Naive thymus-derived CD4-positive, alpha-beta T cell (primary cell): ENCODE measurements at regions of chr12 and their contacts with region 1.

Region 1: GRCh38 chr12:122526683-122527477 is at the starts of genes KNTC1 and RSRC2:
- DNase-seq: peak; percentile 87 to 99 (median 99)
- ATAC-seq: peak; percentile 96
- H3K4me3 ChIP-seq: peak within 1 kb of the TSS; percentile 86
- H3K4me3 Mint-ChIP-seq: no peak within 1 kb of the TSS
- H3K27ac ChIP-seq: peak within 1 kb of the TSS; percentile 94
- H3K27ac Mint-ChIP-seq: peak within 1 kb of the TSS in 1 of 9 donors; percentile 68
- H3K4me1 ChIP-seq: peaks cover 30 to 37% of the 10 kb centered on the region in 2 donors
- H3K4me1 Mint-ChIP-seq: peaks cover 24 to 41% (median 36%) of the 10 kb centered on the region in 7 donors
- H3K27me3 ChIP-seq: no peaks in the 10 kb centered on the region
- H3K27me3 Mint-ChIP-seq: no peaks in the 10 kb centered on the region
- total RNA-seq, gene KNTC1: 24.5 to 102 (median 31.0) TPM
- total RNA-seq, gene RSRC2: 89.7 to 249 (median 139) TPM

Region 2: DNA sequence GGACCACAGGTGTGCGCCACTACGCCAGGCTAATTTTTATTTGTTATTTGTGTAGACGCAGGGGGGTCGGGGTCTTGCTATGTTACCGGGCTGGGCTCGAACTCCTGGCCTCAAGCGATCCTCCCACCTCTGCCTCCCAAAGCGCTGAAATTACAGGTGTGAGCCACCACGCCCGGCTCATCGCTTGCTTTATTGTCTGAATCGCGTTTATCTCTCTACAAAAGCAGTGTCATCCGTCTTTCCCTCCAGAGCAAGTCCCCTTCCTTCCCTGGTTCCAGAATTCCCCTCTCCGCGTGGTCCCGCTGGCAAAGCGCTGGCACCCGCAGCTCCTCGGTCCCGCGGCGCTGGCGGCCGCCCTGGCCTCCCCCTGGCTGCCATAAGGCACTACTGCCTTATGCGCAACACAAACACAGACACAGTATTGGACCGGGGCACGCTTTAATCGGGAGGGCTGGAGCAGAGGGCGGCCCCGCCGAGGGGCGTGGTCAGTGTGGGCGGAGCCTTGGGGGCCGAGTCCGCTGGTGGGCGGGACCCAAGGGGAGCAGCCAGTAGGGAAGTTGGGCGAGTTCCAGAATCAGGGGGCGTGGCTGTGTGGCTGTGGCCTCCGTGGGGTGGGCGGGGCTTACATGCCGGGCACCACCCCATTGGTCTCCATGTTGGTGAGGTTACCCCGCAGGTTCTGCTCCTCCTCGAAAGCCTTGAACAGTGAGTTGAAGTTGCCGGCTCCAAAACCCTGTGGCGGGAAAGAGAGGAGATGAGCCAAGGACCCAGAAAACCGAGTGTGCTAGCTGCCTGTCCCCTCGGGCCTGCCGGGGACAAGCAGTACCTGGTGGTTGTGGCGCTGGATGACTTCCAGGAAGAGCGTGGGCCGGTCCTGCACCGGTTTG is 687.5 kb before region 1 on chr12:
- CTCF ChIA-PET with region 1: no interaction called
- POLR2A ChIA-PET with region 1: no interaction called
- intact Hi-C with region 1: loop called in 1 of 2 experiments (anchors 1 kb)
- DNase-seq: peak; percentile 98 to 100 (median 99)
- ATAC-seq: peak; percentile 100
- H3K4me3 ChIP-seq: peak overlapping the region; percentile 91
- H3K4me3 Mint-ChIP-seq: peak overlapping the region; percentile 96 to 100 (median 98)
- H3K27ac ChIP-seq: peak overlapping the region; percentile 58
- H3K27ac Mint-ChIP-seq: peak overlapping the region; percentile 87 to 96 (median 92)
- H3K4me1 ChIP-seq: peaks cover 8 to 13% of the 10 kb centered on the region in 2 donors
- H3K4me1 Mint-ChIP-seq: peaks cover 12 to 27% (median 18%) of the 10 kb centered on the region in 7 donors
- H3K27me3 ChIP-seq: no peaks in the 10 kb centered on the region
- H3K27me3 Mint-ChIP-seq: no peaks in the 10 kb centered on the region

Region 3: DNA sequence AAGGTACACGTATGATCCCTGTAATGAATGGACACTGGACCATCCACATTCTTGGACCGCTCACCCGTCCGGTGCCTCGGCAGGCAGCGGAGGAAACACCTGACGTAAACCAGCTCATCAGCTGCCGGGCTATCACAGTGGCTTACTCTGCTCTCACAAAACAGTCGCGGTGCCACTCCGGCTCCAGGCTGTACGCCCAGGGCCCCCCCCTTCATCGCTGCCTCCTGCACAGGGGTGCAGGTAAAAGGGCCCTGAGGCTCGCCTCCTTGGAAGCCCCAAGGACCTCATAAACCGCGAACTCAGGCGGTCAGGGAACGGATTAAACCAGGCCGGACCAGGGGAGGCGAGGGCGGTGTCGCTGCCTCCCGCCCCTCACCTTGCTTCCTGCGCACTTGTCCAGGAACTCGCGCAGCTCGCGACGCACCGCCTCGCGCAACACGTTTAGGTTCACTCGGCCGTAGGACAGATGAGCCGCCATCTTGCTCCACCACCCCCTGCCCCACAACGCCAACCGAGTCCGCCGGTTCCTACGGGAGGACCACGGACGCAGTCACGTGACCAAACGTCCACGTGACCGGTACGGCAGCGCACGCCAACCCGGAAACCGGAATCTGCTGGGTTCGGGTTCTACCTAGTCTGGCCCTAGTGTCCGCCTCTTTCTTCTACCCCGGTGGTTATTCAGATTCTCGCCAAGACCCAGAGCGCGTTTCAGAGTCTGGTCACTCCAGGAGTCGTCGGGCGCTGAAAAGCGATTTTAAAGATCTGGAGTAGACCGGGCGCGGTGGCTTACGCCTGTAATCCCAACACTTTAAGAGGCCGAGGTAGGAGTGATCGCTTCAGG is 260.7 kb before region 1 on chr12 and contains the start of gene VPS33A:
- CTCF ChIA-PET with region 1: no interaction called
- POLR2A ChIA-PET with region 1: no interaction called
- intact Hi-C with region 1: loop called (anchors 1 to 5 kb)
- DNase-seq: peak; percentile 82 to 96 (median 90)
- ATAC-seq: peak; percentile 89
- H3K4me3 ChIP-seq: peak within 1 kb of the TSS; percentile 74
- H3K4me3 Mint-ChIP-seq: peak within 1 kb of the TSS; percentile 93 to 99 (median 96)
- H3K27ac ChIP-seq: peak within 1 kb of the TSS; percentile 95
- H3K27ac Mint-ChIP-seq: peak within 1 kb of the TSS; percentile 98 to 100 (median 99)
- H3K4me1 ChIP-seq: peaks cover 12 to 17% of the 10 kb centered on the region in 2 donors
- H3K4me1 Mint-ChIP-seq: peaks cover 0 to 37% (median 32%) of the 10 kb centered on the region in 7 donors
- H3K27me3 ChIP-seq: no peaks in the 10 kb centered on the region
- H3K27me3 Mint-ChIP-seq: peaks cover 0 to 6% (median 0%) of the 10 kb centered on the region in 5 donors
- total RNA-seq, gene VPS33A: 19.9 to 34.5 (median 31.4) TPM

Region 4: GRCh38 chr12:122752464-122753318 is 225.8 kb after region 1 on chr12 and contains the start of gene DENR:
- CTCF ChIA-PET with region 1: no interaction called
- POLR2A ChIA-PET with region 1: interaction called, 15 read pairs
- intact Hi-C with region 1: loop called (anchors 1 kb)
- DNase-seq: peak; percentile 98 to 100 (median 99)
- ATAC-seq: peak; percentile 99
- H3K4me3 ChIP-seq: peak within 1 kb of the TSS; percentile 87
- H3K4me3 Mint-ChIP-seq: peak within 1 kb of the TSS; percentile 93 to 100 (median 96)
- H3K27ac ChIP-seq: peak within 1 kb of the TSS; percentile 94
- H3K27ac Mint-ChIP-seq: peak within 1 kb of the TSS; percentile 89 to 98 (median 96)
- H3K4me1 ChIP-seq: peaks cover 12 to 19% of the 10 kb centered on the region in 2 donors
- H3K4me1 Mint-ChIP-seq: peaks cover 31 to 70% (median 60%) of the 10 kb centered on the region in 7 donors
- H3K27me3 ChIP-seq: no peaks in the 10 kb centered on the region
- H3K27me3 Mint-ChIP-seq: no peaks in the 10 kb centered on the region
- total RNA-seq, gene DENR: 29.5 to 65.5 (median 46.1) TPM

Region 5: DNA sequence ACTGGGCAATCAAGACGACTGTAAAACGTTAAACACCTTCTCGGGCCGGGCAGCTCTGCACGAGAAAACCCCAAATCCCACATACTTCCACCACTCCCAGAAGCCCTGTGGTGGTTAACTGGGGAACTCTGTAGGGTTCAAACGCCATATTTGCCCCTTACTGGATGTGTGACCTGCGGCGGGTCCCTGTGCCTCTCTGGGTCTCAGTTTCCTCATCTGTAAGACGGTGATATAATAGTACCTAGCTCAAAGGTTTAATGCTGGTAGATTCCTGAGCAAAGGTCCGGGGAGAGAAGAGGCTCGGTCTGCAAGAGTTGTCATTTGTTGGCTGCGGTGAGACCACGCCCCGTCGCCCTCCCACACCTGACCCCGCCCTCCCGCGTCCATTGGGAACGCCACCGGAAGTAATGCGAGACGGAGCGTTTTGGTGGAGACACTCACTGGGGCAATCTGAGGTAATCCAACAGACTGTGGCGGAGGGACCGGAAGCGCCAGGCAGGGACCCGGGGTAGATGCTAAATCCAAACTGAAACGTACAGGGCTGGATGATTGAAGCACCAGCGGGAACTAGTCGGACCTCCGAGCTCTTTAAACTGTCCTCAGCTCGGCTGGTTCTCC is 447.5 kb after region 1 on chr12:
- CTCF ChIA-PET with region 1: no interaction called
- POLR2A ChIA-PET with region 1: no interaction called
- intact Hi-C with region 1: loop called in 1 of 2 experiments (anchors 2 kb)
- DNase-seq: peak; percentile 92 to 98 (median 98)
- ATAC-seq: peak; percentile 92
- H3K4me3 ChIP-seq: peak overlapping the region; percentile 100
- H3K4me3 Mint-ChIP-seq: peak overlapping the region; percentile 92 to 99 (median 97)
- H3K27ac ChIP-seq: peak overlapping the region; percentile 98
- H3K27ac Mint-ChIP-seq: peak overlapping the region; percentile 99 to 100 (median 99)
- H3K4me1 ChIP-seq: peaks cover 18 to 23% of the 10 kb centered on the region in 2 donors
- H3K4me1 Mint-ChIP-seq: peaks cover 17 to 39% (median 30%) of the 10 kb centered on the region in 7 donors
- H3K27me3 ChIP-seq: no peaks in the 10 kb centered on the region
- H3K27me3 Mint-ChIP-seq: peaks cover 0 to 3% (median 0%) of the 10 kb centered on the region in 5 donors

Region 6: GRCh38 chr12:123633379-123634141 is 1106.7 kb after region 1 on chr12 and contains the starts of genes EIF2B1 and GTF2H3:
- CTCF ChIA-PET with region 1: no interaction called
- POLR2A ChIA-PET with region 1: no interaction called
- intact Hi-C with region 1: loop called in 1 of 2 experiments (anchors 1 kb)
- DNase-seq: peak; percentile 83 to 96 (median 94)
- ATAC-seq: peak; percentile 98
- H3K4me3 ChIP-seq: peak within 1 kb of the TSS; percentile 85
- H3K4me3 Mint-ChIP-seq: peak within 1 kb of the TSS; percentile 89 to 100 (median 96)
- H3K27ac ChIP-seq: peak within 1 kb of the TSS; percentile 91
- H3K27ac Mint-ChIP-seq: peak within 1 kb of the TSS; percentile 91 to 99 (median 96)
- H3K4me1 ChIP-seq: peaks cover 11 to 16% of the 10 kb centered on the region in 2 donors
- H3K4me1 Mint-ChIP-seq: peaks cover 21 to 54% (median 43%) of the 10 kb centered on the region in 7 donors
- H3K27me3 ChIP-seq: no peaks in the 10 kb centered on the region
- H3K27me3 Mint-ChIP-seq: no peaks in the 10 kb centered on the region
- total RNA-seq, gene EIF2B1: 44.0 to 64.3 (median 49.5) TPM
- total RNA-seq, gene GTF2H3: 21.4 to 39.7 (median 27.7) TPM